MCF 10A (cell line): ENCODE measurements at regions of chr19 and their contacts with region 1.

Region 1: GRCh38 chr19:44723952-44724319 is 24.6 kb upstream of the BCL3 start:
- DNase-seq: peak; percentile 90
- H3K4me3 Mint-ChIP-seq: no peak overlapping the region
- H3K27ac Mint-ChIP-seq: no peak overlapping the region
- H3K4me1 Mint-ChIP-seq: peaks cover 10% of the 10 kb centered on the region
- H3K27me3 Mint-ChIP-seq: no peaks in the 10 kb centered on the region
- CTCF ChIP-seq: peak; percentile 97

Region 2: GRCh38 chr19:44576843-44577565 is 146.9 kb before region 1 on chr19:
- CTCF ChIA-PET with region 1: interaction called, 13 read pairs
- POLR2A ChIA-PET with region 1: no interaction called
- intact Hi-C with region 1: no loop called
- DNase-seq: peak; percentile 78
- H3K4me3 Mint-ChIP-seq: no peak overlapping the region
- H3K27ac Mint-ChIP-seq: no peak overlapping the region
- H3K4me1 Mint-ChIP-seq: no peaks in the 10 kb centered on the region
- H3K27me3 Mint-ChIP-seq: no peaks in the 10 kb centered on the region
- CTCF ChIP-seq: peak; percentile 61

Region 3: DNA sequence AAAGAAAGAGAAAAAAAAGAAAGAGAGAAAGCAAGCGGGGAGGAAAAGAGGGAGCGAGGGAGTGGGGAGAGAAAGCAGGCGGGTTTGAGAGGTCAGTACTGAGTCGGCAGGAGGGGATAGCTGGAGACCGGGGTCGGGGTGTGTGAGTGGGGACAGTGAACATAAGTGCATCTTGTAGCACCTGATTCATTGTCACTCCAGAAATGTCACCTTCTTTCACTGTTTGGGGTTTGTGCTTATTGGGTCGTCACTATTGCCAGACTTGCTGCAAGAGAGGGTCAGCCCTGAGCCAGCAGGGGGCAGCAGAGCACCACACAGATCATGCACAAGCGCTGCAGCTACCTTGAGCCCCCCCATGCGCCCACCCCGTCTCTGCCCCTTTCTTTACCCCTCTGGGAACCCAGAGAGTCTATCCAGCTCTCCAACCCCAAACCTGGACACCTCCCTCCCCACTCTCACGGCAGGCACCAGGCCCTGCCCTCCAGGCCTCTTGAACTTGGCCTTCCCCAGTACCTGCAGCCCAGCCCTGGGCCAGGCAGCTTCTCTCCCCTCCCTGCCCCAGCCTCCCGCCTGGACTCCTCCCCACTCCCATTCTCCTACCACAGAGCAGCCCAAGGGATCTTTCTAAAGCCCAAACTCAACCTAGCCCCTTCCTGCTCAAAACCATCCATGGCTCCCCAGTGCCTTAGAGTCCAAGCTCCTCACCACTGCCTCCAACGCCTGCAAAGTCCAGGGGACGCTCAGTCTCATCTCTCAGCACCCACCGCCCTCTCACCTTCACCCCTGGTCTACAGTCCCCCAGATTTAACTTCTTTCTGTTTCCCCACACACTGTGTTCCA is 34.7 kb before region 1 on chr19:
- CTCF ChIA-PET with region 1: interaction called, 40 read pairs
- POLR2A ChIA-PET with region 1: interaction called, 3 read pairs
- intact Hi-C with region 1: no loop called
- DNase-seq: peak; percentile 61
- H3K4me3 Mint-ChIP-seq: no peak overlapping the region
- H3K27ac Mint-ChIP-seq: no peak overlapping the region
- H3K4me1 Mint-ChIP-seq: peaks cover 25% of the 10 kb centered on the region
- H3K27me3 Mint-ChIP-seq: no peaks in the 10 kb centered on the region
- CTCF ChIP-seq: peak; percentile 94

Region 4: DNA sequence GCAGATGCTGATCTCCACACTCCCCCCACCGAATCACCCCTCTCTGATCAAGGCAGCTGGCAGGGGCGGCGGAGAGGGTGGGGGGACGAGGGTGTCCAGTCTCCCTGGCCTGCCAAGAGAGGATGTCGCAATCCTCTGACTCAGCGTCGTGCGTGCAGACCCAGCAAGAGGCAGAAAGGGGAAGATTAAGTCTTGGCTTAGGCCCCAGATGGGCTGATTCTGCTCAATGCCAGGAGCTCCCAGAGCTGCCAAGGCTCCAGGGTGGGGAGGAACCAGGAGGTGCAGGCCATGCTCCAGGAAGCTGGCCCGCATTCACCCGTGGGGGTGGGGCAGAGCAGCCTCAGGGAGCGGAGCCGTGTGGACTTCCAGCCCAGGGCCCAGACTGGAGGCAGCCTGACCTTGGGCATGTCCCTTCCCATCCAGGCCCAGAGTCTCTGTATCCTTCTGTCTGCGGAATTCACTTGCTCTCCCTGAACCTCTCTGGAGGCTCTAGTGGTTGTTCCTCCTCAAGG is 18.0 kb after region 1 on chr19:
- CTCF ChIA-PET with region 1: interaction called, 29 read pairs
- POLR2A ChIA-PET with region 1: interaction called, 9 read pairs
- intact Hi-C with region 1: no loop called
- DNase-seq: peak; percentile 100
- H3K4me3 Mint-ChIP-seq: peak overlapping the region; percentile 55
- H3K27ac Mint-ChIP-seq: peak overlapping the region; percentile 85
- H3K4me1 Mint-ChIP-seq: peaks cover 43% of the 10 kb centered on the region
- H3K27me3 Mint-ChIP-seq: no peaks in the 10 kb centered on the region
- CTCF ChIP-seq: no peak

Region 5: DNA sequence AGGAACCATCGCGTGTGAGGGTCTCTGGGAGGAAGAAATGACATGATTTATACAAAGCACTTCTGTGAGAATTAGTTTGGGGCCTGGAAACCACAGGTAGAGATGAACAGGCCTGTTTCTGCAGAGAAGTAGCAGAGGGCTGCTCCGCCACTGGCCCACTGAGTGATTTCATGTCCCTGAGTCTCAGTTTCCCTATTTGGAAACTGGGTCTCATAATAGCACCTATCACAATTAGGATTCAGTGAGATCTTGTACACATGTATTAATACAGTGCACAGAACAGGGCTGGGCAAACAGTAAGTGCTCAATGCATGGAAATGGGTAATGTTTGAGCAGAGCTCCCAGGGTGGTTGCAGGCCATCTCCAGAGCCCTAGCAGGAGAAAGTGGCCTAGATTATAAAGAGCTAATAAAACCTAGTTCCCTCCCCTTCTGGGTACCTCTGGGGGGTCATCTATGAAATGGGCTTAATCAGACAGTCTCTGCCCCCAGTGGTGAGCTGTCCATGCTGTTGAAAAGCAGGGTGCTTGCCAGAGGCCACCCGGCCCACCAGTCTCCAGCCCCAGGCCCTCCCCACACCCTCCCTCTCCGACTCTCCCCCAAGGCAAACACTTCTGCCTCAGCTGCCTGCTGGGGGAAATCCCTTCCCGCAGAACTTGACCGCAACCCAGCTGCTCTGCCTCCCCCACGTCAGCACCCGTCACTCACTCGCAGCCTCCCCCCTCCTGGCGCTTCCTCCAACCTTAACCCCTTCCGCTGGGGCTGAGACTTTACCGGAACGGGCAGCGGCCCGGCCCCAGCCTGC is 29.1 kb after region 1 on chr19:
- CTCF ChIA-PET with region 1: interaction called, 30 read pairs
- POLR2A ChIA-PET with region 1: interaction called, 12 read pairs
- intact Hi-C with region 1: loop called (anchors 1 kb)
- DNase-seq: peak; percentile 98
- H3K4me3 Mint-ChIP-seq: peak overlapping the region; percentile 73
- H3K27ac Mint-ChIP-seq: peak overlapping the region; percentile 9
- H3K4me1 Mint-ChIP-seq: peaks cover 40% of the 10 kb centered on the region
- H3K27me3 Mint-ChIP-seq: no peaks in the 10 kb centered on the region
- CTCF ChIP-seq: no peak

Region 6: DNA sequence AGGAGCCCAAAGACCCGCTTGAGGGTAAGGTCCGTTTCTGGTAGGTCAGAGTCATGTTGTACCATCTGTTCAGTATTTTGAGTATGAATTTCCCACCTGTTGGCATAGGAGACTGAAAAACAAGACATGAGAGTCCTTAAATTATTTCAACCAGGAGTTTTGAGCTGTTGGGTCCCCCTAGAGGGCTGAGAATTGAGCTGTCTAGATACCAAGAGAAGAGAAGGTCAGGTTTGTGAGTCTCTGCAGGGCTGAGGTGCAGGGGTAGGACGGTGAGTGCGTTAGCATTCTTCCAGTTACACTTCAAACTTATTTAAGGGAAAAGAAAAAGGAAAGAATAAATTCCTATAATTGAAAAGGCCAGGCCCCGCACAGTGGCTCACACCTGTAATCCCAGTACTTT is 58.8 kb after region 1 on chr19:
- CTCF ChIA-PET with region 1: interaction called, 414 read pairs
- POLR2A ChIA-PET with region 1: no interaction called
- intact Hi-C with region 1: no loop called
- DNase-seq: no peak
- H3K4me3 Mint-ChIP-seq: no peak overlapping the region
- H3K27ac Mint-ChIP-seq: no peak overlapping the region
- H3K4me1 Mint-ChIP-seq: no peaks in the 10 kb centered on the region
- H3K27me3 Mint-ChIP-seq: no peaks in the 10 kb centered on the region
- CTCF ChIP-seq: no peak